Posterior vena cava (tissue), 2 donors: ENCODE measurements at regions of chr2 and their contacts with region 1.

Region 1: DNA sequence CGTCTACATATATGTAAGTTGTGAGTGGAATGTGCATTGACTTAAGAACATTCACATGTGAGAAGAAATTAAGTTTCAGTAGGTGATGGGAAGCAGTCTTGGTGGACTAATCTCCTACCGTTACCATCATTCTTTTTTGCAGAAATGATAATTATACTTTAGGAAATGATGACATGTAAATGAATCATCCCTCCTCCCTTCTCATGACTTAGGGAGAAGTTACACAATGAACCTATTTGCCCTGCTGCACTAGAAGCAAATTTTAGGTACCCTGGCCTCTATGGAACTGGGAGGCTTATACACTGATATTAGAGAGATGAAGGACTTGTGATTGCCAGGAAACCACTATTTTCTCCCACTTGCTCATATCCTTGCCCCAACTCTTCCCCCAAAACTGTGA is 214.2 kb downstream of the CALCRL start:
- DNase-seq: no peak

Region 2: DNA sequence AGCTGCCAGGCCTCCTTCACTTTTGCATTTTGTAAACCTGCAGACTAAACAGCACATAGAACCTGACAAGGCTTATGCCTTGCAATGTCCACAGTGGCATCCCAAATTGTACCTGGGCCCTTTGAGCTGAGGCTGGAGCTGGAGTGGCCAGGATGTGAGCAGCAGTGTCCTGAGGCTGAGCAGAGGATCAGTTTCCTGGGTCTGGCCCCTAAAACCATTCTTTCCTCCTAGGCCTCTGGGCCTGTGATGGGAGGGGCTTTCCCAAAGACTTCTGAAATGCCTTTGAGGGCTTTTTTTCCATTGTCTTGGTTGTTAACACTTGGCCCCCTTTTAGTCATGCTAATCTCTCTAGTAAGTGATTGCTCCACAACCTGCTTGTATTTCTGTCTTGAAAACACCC is 1462.4 kb before region 1 on chr2:
- intact Hi-C with region 1: loop called in 1 of 2 experiments (anchors 5 kb)
- DNase-seq: no peak

Region 3: DNA sequence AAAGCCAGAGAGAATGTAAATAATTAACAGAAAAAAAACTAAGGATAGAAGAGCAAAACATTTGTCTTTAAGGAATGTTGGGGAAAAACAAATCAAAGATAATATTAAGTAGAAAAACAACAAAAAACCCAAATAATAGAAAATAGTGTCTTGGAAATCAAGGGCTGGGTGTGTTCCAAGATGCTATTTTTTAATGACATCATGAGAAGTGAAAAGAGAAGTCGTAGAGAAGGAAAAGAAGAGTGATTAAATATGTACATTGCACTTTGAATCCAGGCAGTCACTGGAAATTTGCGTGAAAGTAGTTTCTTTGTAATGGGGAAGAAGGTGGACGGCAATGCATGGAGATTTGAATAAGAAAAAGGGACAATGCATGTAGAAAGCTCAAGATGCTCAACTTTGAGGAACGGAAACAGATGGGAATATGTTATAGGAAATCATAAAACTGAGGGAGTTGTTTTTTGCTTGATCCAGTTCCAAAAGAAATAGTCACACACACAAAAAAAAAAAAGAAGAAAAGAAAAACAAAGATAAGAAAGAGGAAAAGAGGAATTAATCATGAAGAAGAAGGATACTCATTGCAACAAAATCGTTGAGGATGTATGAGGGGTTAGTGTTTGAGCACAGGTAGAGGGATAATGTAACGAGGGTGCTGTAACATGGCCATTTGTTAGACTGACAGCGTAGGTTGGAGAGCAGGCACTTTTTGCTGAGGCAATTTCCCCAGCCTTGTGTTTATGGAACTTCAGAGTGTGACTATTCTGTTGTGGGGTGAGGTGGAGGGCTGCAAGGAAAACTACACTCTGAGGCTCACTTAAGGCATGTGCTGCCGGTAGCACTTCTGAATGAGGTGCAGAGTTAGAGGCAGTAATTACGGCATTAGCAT is 30.1 kb after region 1 on chr2:
- intact Hi-C with region 1: no loop called
- DNase-seq: no peak